H1 (cell line): ENCODE measurements at regions of chr9 and their contacts with region 1.

Region 1: DNA sequence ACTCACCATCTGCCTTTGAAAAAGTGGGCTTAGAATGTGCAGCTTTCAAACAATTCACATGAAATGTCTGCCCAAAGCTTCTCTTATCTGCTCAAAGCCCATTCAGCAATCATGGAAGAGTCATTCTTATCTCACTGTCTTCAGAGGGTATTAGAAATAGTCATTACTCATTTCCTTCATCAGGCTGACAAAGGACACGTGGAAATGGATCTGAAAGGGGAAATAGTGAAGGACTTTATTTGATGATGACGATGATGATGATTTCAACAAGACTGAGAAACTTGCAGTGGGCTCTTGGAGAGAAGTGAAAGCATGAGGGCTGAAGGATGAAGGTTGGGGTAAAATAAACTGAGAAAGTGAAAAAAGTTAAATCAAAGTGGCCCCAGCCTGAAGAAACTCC is 194.3 kb downstream of the SMARCA2 start:
- DNase-seq: no peak
- H3K4me3 ChIP-seq: no peak overlapping the region
- H3K27ac ChIP-seq: no peak overlapping the region
- H3K4me1 ChIP-seq: no peaks in the 10 kb centered on the region
- H3K27me3 ChIP-seq: no peaks in the 10 kb centered on the region
- CTCF ChIP-seq: no peak
- EP300 ChIP-seq: no peak
- POLR2A ChIP-seq: no peak
- RAD21 ChIP-seq: no peak

Region 2: GRCh38 chr9:2228132-2228531 is 18.7 kb after region 1 on chr9:
- CTCF ChIA-PET with region 1: interaction called, 10 read pairs
- POLR2A ChIA-PET with region 1: no interaction called
- DNase-seq: peak; percentile 44 to 85
- H3K4me3 ChIP-seq: no peak overlapping the region
- H3K27ac ChIP-seq: no peak overlapping the region
- H3K4me1 ChIP-seq: no peaks in the 10 kb centered on the region
- H3K27me3 ChIP-seq: no peaks in the 10 kb centered on the region
- CTCF ChIP-seq: peak; percentile 60 to 77 (median 60)
- EP300 ChIP-seq: no peak
- POLR2A ChIP-seq: no peak
- RAD21 ChIP-seq: peak; percentile 90 to 91